ENCODE measurements at regions of chr5 and their contacts with region 1.

Region 1: DNA sequence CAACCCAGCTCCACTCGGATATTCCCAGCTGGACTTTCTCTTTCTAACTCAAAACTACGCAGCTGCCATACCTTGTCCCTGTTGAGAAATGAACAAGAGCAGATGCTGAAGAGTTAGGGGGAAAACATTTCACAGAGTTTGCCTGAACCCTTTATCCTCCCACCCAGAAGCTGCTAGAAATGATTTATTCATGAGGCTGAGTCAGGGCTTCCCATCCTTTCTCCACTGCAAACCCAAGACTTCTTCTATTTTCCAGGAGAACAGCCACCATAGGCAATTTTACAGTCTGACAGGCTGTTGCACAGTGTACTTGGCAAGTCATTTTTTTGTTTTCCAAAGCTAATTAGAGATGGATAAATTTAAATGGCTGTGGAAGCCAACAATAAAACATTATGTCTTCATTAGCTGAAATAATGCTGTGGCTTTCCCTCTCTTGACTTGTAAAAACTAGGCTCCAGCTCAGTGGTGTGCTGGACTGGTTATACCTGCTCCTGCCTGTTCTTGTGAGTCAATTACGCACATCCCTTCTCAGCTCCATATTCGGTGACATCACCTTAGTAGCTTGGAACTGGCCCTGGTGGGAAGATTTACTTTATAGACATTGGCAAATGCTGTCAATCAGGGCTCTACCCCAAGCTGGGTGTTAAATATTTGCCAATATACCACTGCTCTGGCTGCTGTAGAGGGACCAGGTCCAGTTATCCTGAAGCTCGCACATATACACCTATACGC is 71.9 kb downstream of the KIF4B start:
- DNase-seq: peak in 1 of 10 donors; percentile 13
- H3K4me3 ChIP-seq: no peak overlapping the region
- H3K27ac ChIP-seq: peak overlapping the region in 36 of 59 donors; percentile 1 to 76 (median 41)
- H3K27me3 ChIP-seq: no peaks in the 10 kb centered on the region
- CTCF ChIP-seq: no peak

Region 2: GRCh38 chr5:155103146-155103545 is 17.7 kb after region 1 on chr5:
- intact Hi-C with region 1: loop called in 1 of 2 experiments (anchors 1 kb)
- DNase-seq: peak in 1 of 10 donors; percentile 12
- H3K4me3 ChIP-seq: no peak overlapping the region
- H3K27ac ChIP-seq: peak overlapping the region in 9 of 59 donors; percentile 8 to 61 (median 41)
- H3K27me3 ChIP-seq: peaks cover 0 to 3% (median 0%) of the 10 kb centered on the region in 45 donors
- CTCF ChIP-seq: no peak

Region 3: GRCh38 chr5:155181542-155181941 is 96.1 kb after region 1 on chr5:
- intact Hi-C with region 1: no loop called
- DNase-seq: no peak
- H3K4me3 ChIP-seq: no peak overlapping the region
- H3K27ac ChIP-seq: no peak overlapping the region
- H3K27me3 ChIP-seq: no peaks in the 10 kb centered on the region
- CTCF ChIP-seq: no peak

Region 4: DNA sequence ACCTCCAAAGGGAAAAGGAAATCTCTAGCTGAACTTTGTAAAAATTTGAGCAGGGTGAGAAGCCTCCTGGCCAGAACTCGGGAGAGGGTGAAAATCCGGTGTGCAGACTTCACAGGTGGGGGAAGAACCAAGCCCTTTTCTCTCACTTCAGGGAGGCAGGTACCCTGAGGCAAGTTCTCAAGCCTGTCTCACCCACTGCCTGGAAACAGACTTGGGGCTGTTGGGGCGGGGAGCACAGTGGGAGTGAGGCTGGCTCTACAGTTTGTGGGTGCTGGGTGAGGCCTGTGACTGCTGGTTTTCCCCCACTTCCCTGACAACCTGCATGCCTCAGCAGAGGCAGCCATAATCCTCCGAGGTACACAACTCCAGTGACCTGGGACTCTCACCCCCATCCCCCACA is 115.2 kb after region 1 on chr5:
- intact Hi-C with region 1: no loop called
- DNase-seq: no peak
- H3K4me3 ChIP-seq: no peak overlapping the region
- H3K27ac ChIP-seq: no peak overlapping the region
- H3K27me3 ChIP-seq: peaks cover 0 to 4% (median 0%) of the 10 kb centered on the region in 45 donors
- CTCF ChIP-seq: no peak